CD4-positive, alpha-beta memory T cell (primary cell): ENCODE measurements at regions of chr12 and their contacts with region 1.

Region 1: DNA sequence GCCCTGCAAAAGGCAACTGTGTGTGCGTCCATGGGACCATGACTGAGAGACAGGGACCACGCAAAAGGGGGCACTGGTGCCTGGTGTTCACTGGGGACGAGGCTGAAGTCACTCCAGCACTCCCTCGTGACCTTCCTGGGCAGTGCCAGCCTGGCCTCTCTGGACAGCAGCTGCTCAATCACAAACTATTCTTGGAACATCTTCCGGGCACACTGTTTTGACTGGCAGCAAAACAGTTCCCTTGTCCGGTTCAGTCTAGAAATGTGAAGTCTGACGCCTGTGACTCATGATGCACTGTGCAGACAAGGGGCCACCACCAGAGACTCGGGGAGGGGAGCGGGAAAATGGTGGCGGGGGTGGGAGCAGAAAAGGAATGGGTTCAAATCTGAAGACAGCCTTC is 20.8 kb downstream of the SNRNP35 start:
- DNase-seq: no peak
- H3K4me3 ChIP-seq: no peak overlapping the region
- H3K4me3 Mint-ChIP-seq: no peak overlapping the region
- H3K27ac ChIP-seq: no peak overlapping the region
- H3K27ac Mint-ChIP-seq: peak overlapping the region in 2 of 7 donors; percentile 32 to 52
- H3K4me1 ChIP-seq: peaks cover 31% of the 10 kb centered on the region
- H3K4me1 Mint-ChIP-seq: peaks cover 22 to 49% (median 35%) of the 10 kb centered on the region in 4 donors
- H3K27me3 ChIP-seq: no peaks in the 10 kb centered on the region
- H3K27me3 Mint-ChIP-seq: no peaks in the 10 kb centered on the region

Region 2: DNA sequence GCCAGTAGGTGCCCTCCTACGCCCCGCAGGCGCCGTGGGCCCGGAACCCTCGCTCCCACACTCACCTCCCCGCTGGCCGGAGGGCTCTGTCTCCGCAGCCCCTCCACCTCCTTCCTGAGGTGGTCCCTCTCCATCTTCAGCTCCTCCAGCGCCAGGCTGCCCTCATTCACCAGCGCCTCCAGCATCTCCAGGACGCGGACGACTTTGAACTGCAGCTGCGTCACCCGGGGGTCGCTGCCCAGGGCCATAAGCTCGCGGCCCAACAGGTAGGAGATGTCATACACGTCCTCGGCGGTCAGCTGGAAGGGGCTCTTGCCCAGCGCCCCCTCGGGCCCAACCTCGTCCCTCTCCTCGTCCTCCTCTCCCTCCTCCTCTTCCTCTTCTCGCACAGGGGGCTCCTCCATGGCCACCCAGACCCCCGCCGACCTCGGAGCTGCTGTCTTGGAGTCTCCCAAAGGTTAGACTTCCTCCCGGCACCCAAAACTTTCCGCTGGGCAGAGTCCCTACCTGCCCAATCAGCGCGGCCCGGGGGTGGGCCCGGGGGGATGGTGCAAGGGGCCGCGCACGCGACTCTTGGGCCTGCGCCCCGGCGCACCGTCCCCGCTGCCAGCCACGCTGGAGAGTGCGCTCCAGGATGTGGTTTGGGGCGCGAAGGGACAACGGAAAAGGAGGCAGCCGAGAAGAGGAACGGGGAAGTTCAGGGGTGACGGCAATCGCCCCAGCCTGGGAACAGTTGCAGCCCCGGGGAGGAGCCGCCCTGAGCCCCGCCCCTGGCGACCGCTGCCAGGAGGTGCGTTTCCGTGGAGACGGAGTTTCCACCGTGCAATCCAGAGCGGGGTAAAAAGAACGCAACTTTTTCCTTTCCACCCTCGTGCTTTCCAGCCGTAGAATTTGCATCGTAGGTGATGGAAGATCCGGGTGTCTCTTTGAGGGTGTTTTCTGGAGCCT is 42.5 kb before region 1 on chr12 and contains the start of gene RILPL2:
- CTCF ChIA-PET with region 1: interaction called, 5 read pairs
- POLR2A ChIA-PET with region 1: interaction called, 11 read pairs
- intact Hi-C with region 1: no loop called
- DNase-seq: peak; percentile 92 to 97 (median 94)
- H3K4me3 ChIP-seq: peak within 1 kb of the TSS; percentile 79 to 95
- H3K4me3 Mint-ChIP-seq: peak within 1 kb of the TSS; percentile 93 to 97 (median 95)
- H3K27ac ChIP-seq: peak within 1 kb of the TSS; percentile 98
- H3K27ac Mint-ChIP-seq: peak within 1 kb of the TSS; percentile 88 to 99 (median 96)
- H3K4me1 ChIP-seq: peaks cover 52% of the 10 kb centered on the region
- H3K4me1 Mint-ChIP-seq: peaks cover 23 to 63% (median 42%) of the 10 kb centered on the region in 4 donors
- H3K27me3 ChIP-seq: no peaks in the 10 kb centered on the region
- H3K27me3 Mint-ChIP-seq: no peaks in the 10 kb centered on the region
- total RNA-seq, gene RILPL2: 11.6 to 11.9 TPM

Region 3: DNA sequence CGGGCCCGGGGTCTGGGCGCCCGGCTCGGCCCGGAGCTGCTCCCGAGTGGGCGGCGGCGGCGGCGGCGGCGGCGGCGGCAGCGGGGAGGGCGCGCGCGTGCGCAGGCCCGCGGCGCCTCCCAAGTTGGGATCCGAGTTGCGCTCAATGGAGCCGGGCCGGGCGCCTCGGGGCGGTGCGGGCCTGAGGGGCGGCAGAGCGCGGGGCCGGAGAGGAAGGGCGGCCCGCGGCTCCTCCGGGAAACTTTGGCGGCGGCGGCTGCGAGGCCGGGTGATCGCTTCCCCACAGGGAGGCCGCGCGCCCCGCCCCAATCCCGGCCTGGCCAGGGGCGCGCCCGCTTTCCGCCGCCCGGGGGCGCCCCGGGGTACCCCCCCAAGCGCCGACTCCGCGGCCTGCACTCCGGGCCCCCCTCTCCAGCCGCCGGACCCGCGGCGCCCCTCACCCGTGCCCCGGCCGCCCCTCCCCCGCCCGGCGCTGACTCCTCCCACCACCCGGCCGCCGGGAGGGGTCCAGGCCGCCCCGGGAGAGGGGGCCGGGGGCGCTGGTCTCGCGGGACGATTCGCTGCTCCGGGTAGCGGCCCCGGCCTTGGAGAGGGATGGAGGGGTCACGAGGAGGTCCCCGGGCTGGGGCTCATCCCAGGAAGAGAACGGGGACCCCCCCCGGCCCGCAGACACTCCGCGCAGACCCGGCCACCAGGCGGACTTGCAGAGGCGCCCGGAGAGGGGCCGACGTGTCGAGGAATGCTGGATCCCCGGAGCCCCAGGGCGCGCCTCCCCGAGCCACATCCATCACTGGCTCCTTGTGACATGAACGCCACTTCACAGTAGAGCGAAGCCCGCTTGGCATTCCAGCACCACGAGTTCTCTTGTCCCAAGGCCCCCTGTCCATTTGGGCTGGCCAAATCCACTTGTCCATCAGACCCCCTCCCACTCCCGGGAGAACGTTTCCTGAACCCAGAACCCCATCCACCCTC is 55.2 kb after region 1 on chr12 and contains the start of gene RILPL1:
- CTCF ChIA-PET with region 1: interaction called, 4 read pairs
- POLR2A ChIA-PET with region 1: interaction called, 4 read pairs
- intact Hi-C with region 1: loop called (anchors 10 kb)
- DNase-seq: peak in 4 of 5 donors; percentile 41 to 53 (median 46)
- H3K4me3 ChIP-seq: peak within 1 kb of the TSS; percentile 29 to 51
- H3K4me3 Mint-ChIP-seq: peak within 1 kb of the TSS; percentile 86 to 91 (median 88)
- H3K27ac ChIP-seq: peak within 1 kb of the TSS; percentile 11
- H3K27ac Mint-ChIP-seq: peak within 1 kb of the TSS; percentile 57 to 82 (median 74)
- H3K4me1 ChIP-seq: peaks cover 20% of the 10 kb centered on the region
- H3K4me1 Mint-ChIP-seq: peaks cover 11 to 31% (median 16%) of the 10 kb centered on the region in 4 donors
- H3K27me3 ChIP-seq: no peaks in the 10 kb centered on the region
- H3K27me3 Mint-ChIP-seq: no peaks in the 10 kb centered on the region
- total RNA-seq, gene RILPL1: 8.1 to 8.5 TPM

Region 4: GRCh38 chr12:124428130-124428791 is 949.5 kb after region 1 on chr12:
- CTCF ChIA-PET with region 1: no interaction called
- POLR2A ChIA-PET with region 1: no interaction called
- intact Hi-C with region 1: no loop called
- DNase-seq: no peak
- H3K4me3 ChIP-seq: no peak overlapping the region
- H3K4me3 Mint-ChIP-seq: no peak overlapping the region
- H3K27ac ChIP-seq: no peak overlapping the region
- H3K27ac Mint-ChIP-seq: peak overlapping the region in 2 of 7 donors; percentile 25 to 42
- H3K4me1 ChIP-seq: no peaks in the 10 kb centered on the region
- H3K4me1 Mint-ChIP-seq: peaks cover 4 to 16% (median 10%) of the 10 kb centered on the region in 4 donors
- H3K27me3 ChIP-seq: no peaks in the 10 kb centered on the region
- H3K27me3 Mint-ChIP-seq: no peaks in the 10 kb centered on the region